ENCODE measurements at regions of chr3 and their contacts with region 1.

Region 1: GRCh38 chr3:9249273-9250192 is at the start of gene SRGAP3:
- ATAC-seq: peak; percentile 94 to 98 (median 96)
- H3K4me3 ChIP-seq: peak within 1 kb of the TSS; percentile 50 to 93 (median 57)
- H3K27ac ChIP-seq: peak within 1 kb of the TSS; percentile 71 to 85
- H3K4me1 ChIP-seq: peaks cover 23 to 27% of the 10 kb centered on the region in 2 donors
- total RNA-seq, gene SRGAP3: 24.3 to 77.7 (median 51.0) TPM

Region 2: GRCh38 chr3:9147215-9147895 is 102.2 kb before region 1 on chr3:
- in situ Hi-C with region 1: loop called in 1 of 9 experiments (anchors 25 kb)
- ATAC-seq: peak in 6 of 8 experiments; percentile 6 to 66 (median 38)
- H3K4me3 ChIP-seq: no peak overlapping the region
- H3K27ac ChIP-seq: peak overlapping the region; percentile 19 to 35
- H3K4me1 ChIP-seq: peaks cover 33 to 43% of the 10 kb centered on the region in 2 donors

Region 3: DNA sequence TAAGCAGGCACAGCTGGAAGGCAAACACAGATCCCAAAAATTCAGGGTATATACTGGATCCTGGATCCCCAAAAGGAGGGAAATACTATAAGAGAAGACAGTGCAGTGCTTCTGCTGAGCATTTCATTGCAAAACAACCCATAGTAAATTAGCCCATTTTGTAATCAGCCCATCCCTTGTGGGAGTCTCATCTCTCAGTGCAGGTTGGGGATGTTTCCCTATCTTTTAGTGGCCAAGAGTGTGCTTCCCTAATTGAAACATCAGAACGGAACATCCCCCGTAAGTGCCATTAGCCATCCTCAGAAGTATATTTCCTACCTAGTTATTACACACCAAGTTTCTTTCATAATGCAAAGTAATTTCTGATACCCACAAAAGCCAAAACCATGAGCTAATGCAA is 388.6 kb after region 1 on chr3:
- in situ Hi-C with region 1: no loop called
- ATAC-seq: no peak
- H3K4me3 ChIP-seq: no peak overlapping the region
- H3K27ac ChIP-seq: no peak overlapping the region
- H3K4me1 ChIP-seq: no peaks in the 10 kb centered on the region